HEK293 (cell line): ENCODE measurements at regions of chr18 and their contacts with region 1.

Region 1: GRCh38 chr18:24176727-24177416 is 38.0 kb downstream of the CABYR start:
- H3K4me3 ChIP-seq: no peak overlapping the region
- H3K27ac ChIP-seq: no peak overlapping the region
- H3K4me1 ChIP-seq: no peaks in the 10 kb centered on the region
- CTCF ChIP-seq: peak; percentile 58

Region 2: DNA sequence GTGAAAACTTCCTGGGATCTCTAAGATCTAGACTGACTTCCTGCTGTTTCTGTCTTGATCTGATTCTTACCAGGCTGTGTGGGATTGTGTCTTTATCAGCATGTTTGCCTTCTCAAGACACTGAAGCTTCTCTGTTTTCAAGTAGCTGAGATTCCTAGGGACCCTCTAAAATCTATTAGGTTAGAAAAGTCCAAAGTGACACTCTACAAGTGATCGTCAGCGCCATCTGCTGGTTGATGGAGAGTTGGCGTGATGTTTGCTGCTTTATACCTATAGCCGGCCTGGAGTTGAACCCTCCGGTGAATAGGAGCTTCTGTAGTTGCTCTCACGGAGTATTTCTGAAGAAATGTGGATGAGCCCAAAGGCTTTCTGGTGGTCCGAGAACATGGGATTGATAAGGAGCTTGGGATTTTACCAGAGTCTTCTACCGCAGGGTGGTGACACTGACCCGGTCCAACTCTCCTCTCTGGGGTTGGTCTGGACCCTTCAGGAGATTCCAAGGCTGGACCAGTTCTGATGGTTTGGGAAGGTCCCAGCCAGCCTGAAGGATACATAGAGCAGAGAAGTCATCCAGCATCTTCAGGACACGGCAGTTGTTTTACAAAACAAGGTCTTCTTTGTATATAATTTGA is 258.4 kb before region 1 on chr18:
- CTCF ChIA-PET with region 1: no interaction called
- POLR2A ChIA-PET with region 1: no interaction called
- H3K4me3 ChIP-seq: no peak overlapping the region
- H3K27ac ChIP-seq: no peak overlapping the region
- H3K4me1 ChIP-seq: no peaks in the 10 kb centered on the region
- CTCF ChIP-seq: no peak

Region 3: DNA sequence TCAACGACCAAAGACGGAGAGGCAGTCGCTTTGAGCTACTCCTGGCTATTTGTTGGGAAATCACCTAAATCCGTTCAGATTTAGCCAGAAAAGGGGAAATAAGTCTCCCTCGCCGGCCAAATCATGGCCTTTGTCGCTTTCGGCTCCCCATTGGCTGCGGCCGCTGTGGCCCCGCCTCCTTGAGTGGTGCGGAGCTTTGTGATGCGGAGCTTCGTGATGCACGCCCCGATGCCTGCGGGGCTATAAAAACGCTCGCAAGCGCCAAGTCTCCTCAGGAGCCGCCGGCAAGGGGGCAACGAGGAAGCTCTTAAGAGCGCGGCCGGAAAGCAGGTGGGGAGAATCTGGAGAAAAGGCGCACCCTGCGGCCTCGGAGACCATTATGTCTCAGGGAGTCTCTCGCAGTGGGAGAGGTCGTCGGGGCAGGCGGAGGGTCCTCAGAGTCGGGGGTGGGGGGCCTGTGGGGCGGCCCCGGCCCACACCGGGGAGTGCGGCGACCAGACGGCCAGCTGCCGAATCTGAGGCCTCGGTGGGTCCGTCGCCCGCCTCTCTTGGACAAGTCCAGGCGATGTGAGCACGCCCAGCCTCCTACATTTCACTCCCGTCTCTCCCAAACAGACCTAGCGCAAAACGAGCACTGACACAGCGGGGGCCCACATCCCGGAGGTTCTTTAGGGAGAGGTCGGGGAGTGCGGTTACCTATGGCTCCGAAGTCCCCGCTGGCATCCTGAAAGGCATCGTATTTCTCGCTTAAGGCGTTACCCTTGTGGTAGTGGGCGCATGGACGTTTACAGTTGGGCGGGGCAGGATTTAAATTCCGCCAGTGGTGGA is 37.9 kb before region 1 on chr18 and contains the start of gene CABYR:
- CTCF ChIA-PET with region 1: interaction called, 6 read pairs
- POLR2A ChIA-PET with region 1: interaction called, 12 read pairs
- H3K4me3 ChIP-seq: peak within 1 kb of the TSS; percentile 59
- H3K27ac ChIP-seq: peak within 1 kb of the TSS; percentile 77
- H3K4me1 ChIP-seq: peaks cover 4% of the 10 kb centered on the region
- CTCF ChIP-seq: no peak; the same call in 1 of the 2 replicates

Region 4: GRCh38 chr18:24189007-24189528 is 12.2 kb after region 1 on chr18:
- CTCF ChIA-PET with region 1: interaction called, 102 read pairs
- POLR2A ChIA-PET with region 1: interaction called, 3 read pairs
- H3K4me3 ChIP-seq: no peak overlapping the region
- H3K27ac ChIP-seq: no peak overlapping the region
- H3K4me1 ChIP-seq: peaks cover 10% of the 10 kb centered on the region; the same call in 1 of the 2 replicates
- CTCF ChIP-seq: no peak

Region 5: DNA sequence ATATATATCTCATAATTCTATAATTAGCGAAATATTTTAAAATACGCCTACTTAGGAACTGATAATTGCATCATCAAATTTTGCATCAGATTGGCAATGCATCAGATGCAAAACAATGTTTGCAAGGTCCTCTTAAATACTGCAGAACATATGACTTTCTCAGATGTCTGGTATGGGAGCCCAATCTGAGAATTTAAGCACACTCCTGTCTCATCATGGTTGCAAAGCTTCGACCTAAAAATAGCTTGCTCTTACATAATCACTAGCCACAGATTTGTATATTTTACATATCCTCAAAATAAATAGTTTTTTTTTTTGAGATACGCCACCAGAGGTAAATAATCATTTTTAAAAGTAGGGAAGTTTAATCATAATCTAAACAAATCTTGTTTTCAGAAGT is 85.2 kb after region 1 on chr18:
- CTCF ChIA-PET with region 1: interaction called, 10 read pairs
- POLR2A ChIA-PET with region 1: no interaction called
- H3K4me3 ChIP-seq: no peak overlapping the region
- H3K27ac ChIP-seq: no peak overlapping the region
- H3K4me1 ChIP-seq: peaks cover 13% of the 10 kb centered on the region
- CTCF ChIP-seq: no peak

Region 6: DNA sequence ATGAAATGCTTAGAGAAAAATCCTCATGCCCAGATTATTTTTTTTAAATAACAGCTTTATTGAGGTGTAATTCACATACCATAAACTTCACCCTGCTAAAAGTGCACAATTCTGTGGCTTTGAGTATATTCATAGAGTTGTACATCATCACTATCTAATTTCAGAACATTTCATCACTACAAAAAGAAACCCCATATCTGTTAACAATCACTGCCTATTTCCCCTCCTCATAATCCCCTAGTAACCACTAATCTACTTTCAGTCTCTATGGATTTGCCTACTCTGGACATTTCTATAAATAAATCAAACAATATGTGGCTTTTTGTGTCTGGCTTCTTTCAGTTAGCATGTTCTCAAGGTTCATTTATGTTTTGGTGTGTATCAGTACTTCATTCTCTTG is 169.4 kb after region 1 on chr18:
- CTCF ChIA-PET with region 1: interaction called, 18 read pairs
- POLR2A ChIA-PET with region 1: no interaction called
- H3K4me3 ChIP-seq: no peak overlapping the region
- H3K27ac ChIP-seq: no peak overlapping the region
- H3K4me1 ChIP-seq: no peaks in the 10 kb centered on the region
- CTCF ChIP-seq: no peak